Activated CD4-positive, alpha-beta T cell treated with anti-CD3 and anti-CD28 coated beads for 36 hours (primary cell): ENCODE measurements at regions of chr5 and their contacts with region 1.

Region 1: GRCh38 chr5:163408311-163408923 is 29.0 kb upstream of the CCNG1 start:
- DNase-seq: peak; percentile 73
- ATAC-seq: peak; percentile 77
- H3K4me3 Mint-ChIP-seq: no peak overlapping the region
- H3K27ac Mint-ChIP-seq: no peak overlapping the region
- H3K4me1 Mint-ChIP-seq: peaks cover 2% of the 10 kb centered on the region
- H3K27me3 Mint-ChIP-seq: peaks cover 2% of the 10 kb centered on the region

Region 2: GRCh38 chr5:161544350-161544765 is 1864.1 kb before region 1 on chr5:
- CTCF ChIA-PET with region 1: interaction called, 3 read pairs
- POLR2A ChIA-PET with region 1: no interaction called
- intact Hi-C with region 1: loop called in 1 of 2 experiments (anchors 1 kb)
- DNase-seq: peak; percentile 56
- ATAC-seq: peak; percentile 42
- H3K4me3 Mint-ChIP-seq: no peak overlapping the region
- H3K27ac Mint-ChIP-seq: no peak overlapping the region
- H3K4me1 Mint-ChIP-seq: peaks cover 7% of the 10 kb centered on the region
- H3K27me3 Mint-ChIP-seq: peaks cover 58% of the 10 kb centered on the region

Region 3: DNA sequence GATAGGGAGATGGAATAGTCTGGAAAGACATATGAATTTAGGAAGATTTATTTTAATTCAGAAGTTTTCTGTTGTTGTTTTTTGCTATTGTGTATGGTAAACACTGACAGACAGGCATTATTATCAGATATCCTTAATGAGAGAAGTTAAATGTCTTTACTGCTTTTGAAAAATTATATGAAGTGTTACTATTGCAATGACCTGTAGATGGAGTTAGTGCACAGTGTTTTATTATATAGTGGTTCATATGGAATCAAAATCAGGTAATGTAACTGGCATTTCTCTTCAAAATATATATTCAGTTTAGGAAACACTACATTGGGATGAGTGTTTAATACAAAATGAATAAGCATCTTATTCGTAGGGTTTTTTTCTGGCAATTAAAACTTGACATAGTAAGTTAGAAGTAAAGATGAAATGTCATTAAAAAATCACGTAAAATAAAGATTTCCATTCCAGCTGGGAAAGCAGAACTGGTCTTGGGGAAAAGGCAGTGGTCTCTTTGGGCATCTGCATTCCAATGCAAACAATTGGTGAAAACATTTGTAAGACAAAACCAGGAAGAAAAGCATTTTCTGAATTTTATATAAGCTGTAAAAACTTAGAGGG is 1556.6 kb before region 1 on chr5:
- CTCF ChIA-PET with region 1: no interaction called
- POLR2A ChIA-PET with region 1: no interaction called
- intact Hi-C with region 1: loop called in 1 of 2 experiments (anchors 5 kb)
- DNase-seq: no peak
- ATAC-seq: no peak
- H3K4me3 Mint-ChIP-seq: no peak overlapping the region
- H3K27ac Mint-ChIP-seq: no peak overlapping the region
- H3K4me1 Mint-ChIP-seq: no peaks in the 10 kb centered on the region
- H3K27me3 Mint-ChIP-seq: peaks cover 22% of the 10 kb centered on the region

Region 4: GRCh38 chr5:162664846-162665245 is 743.6 kb before region 1 on chr5:
- CTCF ChIA-PET with region 1: no interaction called
- POLR2A ChIA-PET with region 1: no interaction called
- intact Hi-C with region 1: no loop called
- DNase-seq: no peak
- ATAC-seq: no peak
- H3K4me3 Mint-ChIP-seq: no peak overlapping the region
- H3K27ac Mint-ChIP-seq: no peak overlapping the region
- H3K4me1 Mint-ChIP-seq: no peaks in the 10 kb centered on the region
- H3K27me3 Mint-ChIP-seq: no peaks in the 10 kb centered on the region

Region 5: GRCh38 chr5:162786234-162786633 is 622.2 kb before region 1 on chr5:
- CTCF ChIA-PET with region 1: no interaction called
- POLR2A ChIA-PET with region 1: no interaction called
- intact Hi-C with region 1: no loop called
- DNase-seq: no peak
- ATAC-seq: no peak
- H3K4me3 Mint-ChIP-seq: no peak overlapping the region
- H3K27ac Mint-ChIP-seq: no peak overlapping the region
- H3K4me1 Mint-ChIP-seq: no peaks in the 10 kb centered on the region
- H3K27me3 Mint-ChIP-seq: no peaks in the 10 kb centered on the region

Region 6: GRCh38 chr5:163306421-163306820 is 102.0 kb before region 1 on chr5:
- CTCF ChIA-PET with region 1: interaction called, 6 read pairs
- POLR2A ChIA-PET with region 1: no interaction called
- intact Hi-C with region 1: loop called in 1 of 2 experiments (anchors 2 kb)
- DNase-seq: no peak
- ATAC-seq: no peak
- H3K4me3 Mint-ChIP-seq: no peak overlapping the region
- H3K27ac Mint-ChIP-seq: no peak overlapping the region
- H3K4me1 Mint-ChIP-seq: no peaks in the 10 kb centered on the region
- H3K27me3 Mint-ChIP-seq: peaks cover 4% of the 10 kb centered on the region

Region 7: DNA sequence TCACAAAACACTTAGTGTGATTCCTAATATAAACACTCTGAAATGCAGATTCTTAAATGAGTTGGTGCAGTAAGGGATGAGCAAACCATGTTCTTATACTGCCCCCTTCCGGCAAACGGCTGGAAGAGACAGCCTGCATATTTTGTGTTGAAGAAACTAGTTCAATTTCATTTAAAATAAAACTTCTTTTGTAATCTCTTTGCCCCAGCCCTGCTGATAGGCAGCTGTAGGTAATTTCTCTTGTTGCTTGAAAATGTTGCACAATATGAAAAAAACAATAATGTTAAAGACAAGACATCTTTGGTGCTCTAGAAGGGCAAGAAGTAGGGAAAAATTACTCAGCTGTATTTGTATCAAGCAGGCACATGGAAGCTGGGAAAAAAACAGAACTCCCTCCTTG is 60.7 kb before region 1 on chr5:
- CTCF ChIA-PET with region 1: interaction called, 4 read pairs
- POLR2A ChIA-PET with region 1: no interaction called
- intact Hi-C with region 1: loop called in 1 of 2 experiments (anchors 2 kb)
- DNase-seq: peak; percentile 70
- ATAC-seq: no peak
- H3K4me3 Mint-ChIP-seq: no peak overlapping the region
- H3K27ac Mint-ChIP-seq: no peak overlapping the region
- H3K4me1 Mint-ChIP-seq: no peaks in the 10 kb centered on the region
- H3K27me3 Mint-ChIP-seq: peaks cover 5% of the 10 kb centered on the region

Region 8: GRCh38 chr5:163397354-163397753 is 11.1 kb before region 1 on chr5:
- CTCF ChIA-PET with region 1: interaction called, 26 read pairs
- POLR2A ChIA-PET with region 1: no interaction called
- intact Hi-C with region 1: no loop called
- DNase-seq: no peak
- ATAC-seq: no peak
- H3K4me3 Mint-ChIP-seq: no peak overlapping the region
- H3K27ac Mint-ChIP-seq: no peak overlapping the region
- H3K4me1 Mint-ChIP-seq: no peaks in the 10 kb centered on the region
- H3K27me3 Mint-ChIP-seq: peaks cover 24% of the 10 kb centered on the region

Region 9: GRCh38 chr5:163424836-163425235 is 16.4 kb after region 1 on chr5:
- CTCF ChIA-PET with region 1: interaction called, 19 read pairs
- POLR2A ChIA-PET with region 1: no interaction called
- intact Hi-C with region 1: no loop called
- DNase-seq: no peak
- ATAC-seq: no peak
- H3K4me3 Mint-ChIP-seq: no peak overlapping the region
- H3K27ac Mint-ChIP-seq: no peak overlapping the region
- H3K4me1 Mint-ChIP-seq: peaks cover 5% of the 10 kb centered on the region
- H3K27me3 Mint-ChIP-seq: no peaks in the 10 kb centered on the region

Region 10: GRCh38 chr5:163604013-163604412 is 195.6 kb after region 1 on chr5:
- CTCF ChIA-PET with region 1: no interaction called
- POLR2A ChIA-PET with region 1: no interaction called
- intact Hi-C with region 1: no loop called
- DNase-seq: no peak
- ATAC-seq: no peak
- H3K4me3 Mint-ChIP-seq: no peak overlapping the region
- H3K27ac Mint-ChIP-seq: no peak overlapping the region
- H3K4me1 Mint-ChIP-seq: no peaks in the 10 kb centered on the region
- H3K27me3 Mint-ChIP-seq: peaks cover 13% of the 10 kb centered on the region

Region 11: DNA sequence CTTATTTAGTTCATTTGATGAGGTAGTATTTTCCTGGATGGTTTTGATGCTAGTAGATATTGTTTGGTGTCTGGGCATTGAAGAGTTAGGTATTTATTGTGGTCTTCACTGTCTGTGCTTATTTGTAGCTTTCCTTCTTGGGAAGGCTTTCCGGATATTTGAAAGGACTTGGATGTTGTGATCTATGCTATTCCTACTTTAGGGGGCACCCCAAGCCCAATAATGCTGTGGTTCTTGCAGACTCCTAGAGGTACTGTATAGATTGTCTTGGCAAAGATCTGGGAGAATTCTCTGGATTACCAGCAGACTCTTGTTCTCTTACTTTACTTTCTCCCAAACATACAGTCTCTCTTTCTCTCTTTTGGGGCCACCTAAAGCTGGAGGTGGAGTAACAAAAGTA is 412.7 kb after region 1 on chr5:
- CTCF ChIA-PET with region 1: no interaction called
- POLR2A ChIA-PET with region 1: no interaction called
- intact Hi-C with region 1: no loop called
- DNase-seq: no peak
- ATAC-seq: no peak
- H3K4me3 Mint-ChIP-seq: no peak overlapping the region
- H3K27ac Mint-ChIP-seq: no peak overlapping the region
- H3K4me1 Mint-ChIP-seq: no peaks in the 10 kb centered on the region
- H3K27me3 Mint-ChIP-seq: no peaks in the 10 kb centered on the region